ENCODE measurements at regions of chr9 and their contacts with region 1.

Region 1: DNA sequence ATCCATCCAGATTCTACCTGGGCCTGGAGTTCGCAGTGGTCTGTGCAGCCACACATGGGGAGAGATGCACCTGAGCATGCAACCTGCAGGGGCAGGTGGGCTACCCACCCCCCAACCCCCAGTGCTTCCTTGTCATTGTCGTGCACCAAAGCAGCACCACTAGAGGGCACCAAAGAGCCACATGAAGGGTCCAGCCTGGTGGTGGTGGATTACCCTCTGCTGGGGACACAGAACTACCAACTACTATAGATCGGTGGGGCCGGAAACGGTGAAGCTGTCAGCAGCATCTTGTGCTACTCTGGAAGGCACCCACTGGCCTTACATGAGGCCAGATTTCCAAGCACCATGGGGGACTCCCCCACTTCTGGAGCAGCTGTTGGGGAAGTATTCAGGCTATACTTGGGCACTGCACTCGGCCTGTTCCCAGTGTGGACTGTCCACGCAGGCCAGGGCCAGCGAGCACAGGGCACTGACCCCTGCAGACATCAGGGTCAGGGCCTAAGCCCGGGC is 60.2 kb upstream of the TBC1D2 start:
- DNase-seq: peak; percentile 88
- CTCF ChIP-seq: peak; percentile 83

Region 2: GRCh38 chr9:98330831-98331230 is 15.2 kb after region 1 on chr9:
- CTCF ChIA-PET with region 1: interaction called, 16 read pairs
- POLR2A ChIA-PET with region 1: no interaction called
- DNase-seq: no peak
- CTCF ChIP-seq: no peak

Region 3: DNA sequence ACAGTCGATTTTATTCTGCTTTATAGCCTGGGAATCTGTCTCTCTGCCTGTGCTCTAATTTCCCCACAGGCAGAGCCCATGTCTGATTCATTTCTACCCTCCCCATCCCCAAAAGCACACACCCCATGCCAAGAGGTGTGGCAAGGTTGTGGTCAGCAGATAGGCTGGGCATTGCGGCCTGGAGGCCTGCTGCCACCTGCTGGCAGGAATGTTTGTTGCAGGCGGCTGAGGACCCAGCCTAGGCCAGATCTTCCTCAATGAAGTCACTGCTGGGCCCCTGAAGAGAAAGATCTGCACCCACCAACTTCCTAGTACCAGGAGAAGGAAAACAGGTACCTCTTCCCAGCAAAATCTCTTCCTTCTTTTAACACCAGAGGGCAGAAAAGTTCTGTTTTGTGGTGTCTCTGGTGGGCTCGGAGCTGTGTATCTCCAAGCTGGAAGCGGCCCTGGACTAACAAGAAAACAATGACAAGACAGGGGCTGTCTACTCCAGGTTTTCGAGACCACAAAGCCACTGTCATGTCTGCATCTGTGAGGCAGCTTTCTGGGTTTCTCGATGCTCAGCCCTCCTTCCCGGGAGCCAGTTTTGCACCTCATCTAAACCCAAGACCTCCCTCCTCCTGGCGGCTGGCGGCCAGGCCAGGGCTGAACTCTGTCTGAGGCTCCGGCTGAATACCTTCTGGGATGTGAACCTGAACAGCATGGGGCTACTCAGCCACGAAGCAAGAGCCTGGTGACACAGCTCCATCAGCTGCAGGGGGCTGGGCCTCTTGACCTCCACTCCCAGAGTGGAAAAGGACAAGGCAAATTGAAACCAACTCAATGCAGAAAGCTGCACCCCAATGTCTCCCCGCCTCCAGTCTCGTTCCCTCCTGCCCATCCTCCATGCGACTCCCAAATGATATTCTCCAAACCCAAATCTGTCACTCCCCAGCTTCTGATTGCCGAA is 475.8 kb after region 1 on chr9:
- CTCF ChIA-PET with region 1: interaction called, 10 read pairs
- POLR2A ChIA-PET with region 1: no interaction called
- DNase-seq: peak; percentile 81
- CTCF ChIP-seq: peak; percentile 94